OCI-LY7 (cell line): ENCODE measurements at regions of chr1 and their contacts with region 1.

Region 1: GRCh38 chr1:231357831-231358354 is 19.8 kb downstream of the SPRTN start:
- DNase-seq: peak; percentile 74
- H3K4me3 ChIP-seq: no peak overlapping the region
- H3K27ac ChIP-seq: no peak overlapping the region
- H3K4me1 ChIP-seq: no peaks in the 10 kb centered on the region
- CTCF ChIP-seq: peak; percentile 96

Region 2: GRCh38 chr1:231590453-231591198 is 232.7 kb after region 1 on chr1:
- CTCF ChIA-PET with region 1: no interaction called
- POLR2A ChIA-PET with region 1: no interaction called
- intact Hi-C with region 1: loop called (anchors 1 kb)
- DNase-seq: peak; percentile 68
- H3K4me3 ChIP-seq: no peak overlapping the region
- H3K27ac ChIP-seq: no peak overlapping the region
- H3K4me1 ChIP-seq: no peaks in the 10 kb centered on the region
- CTCF ChIP-seq: peak; percentile 94

Region 3: GRCh38 chr1:231603598-231604275 is 245.8 kb after region 1 on chr1:
- CTCF ChIA-PET with region 1: no interaction called
- POLR2A ChIA-PET with region 1: interaction called, 5 read pairs
- intact Hi-C with region 1: loop called (anchors 1 kb)
- DNase-seq: peak; percentile 65
- H3K4me3 ChIP-seq: peak overlapping the region; percentile 66
- H3K27ac ChIP-seq: no peak overlapping the region
- H3K4me1 ChIP-seq: no peaks in the 10 kb centered on the region
- CTCF ChIP-seq: peak; percentile 97